Activated naive CD4-positive, alpha-beta T cell treated with anti-CD3 and anti-CD28 coated beads, Interleukin-2, amount 10 ng/mL, durations not matched to agents 7 days and 5 days (primary cell): ENCODE measurements at regions of chr1 and their contacts with region 1.

Region 1: GRCh38 chr1:20194757-20195461 is 8.6 kb upstream of the PLA2G2C start:
- DNase-seq: peak; percentile 81
- H3K4me3 Mint-ChIP-seq: no peak overlapping the region
- H3K27ac Mint-ChIP-seq: no peak overlapping the region
- H3K4me1 Mint-ChIP-seq: no peaks in the 10 kb centered on the region
- H3K27me3 Mint-ChIP-seq: peaks cover 69% of the 10 kb centered on the region

Region 2: GRCh38 chr1:19882111-19883071 is 312.5 kb before region 1 on chr1 and contains the start of gene OTUD3:
- CTCF ChIA-PET with region 1: interaction called, 12 read pairs
- DNase-seq: peak; percentile 97
- H3K4me3 Mint-ChIP-seq: peak within 1 kb of the TSS; percentile 85
- H3K27ac Mint-ChIP-seq: peak within 1 kb of the TSS; percentile 77
- H3K4me1 Mint-ChIP-seq: peaks cover 36% of the 10 kb centered on the region
- H3K27me3 Mint-ChIP-seq: peaks cover 14% of the 10 kb centered on the region

Region 3: GRCh38 chr1:20137043-20137442 is 57.9 kb before region 1 on chr1:
- CTCF ChIA-PET with region 1: no interaction called
- DNase-seq: no peak
- H3K4me3 Mint-ChIP-seq: no peak overlapping the region
- H3K27ac Mint-ChIP-seq: no peak overlapping the region
- H3K4me1 Mint-ChIP-seq: no peaks in the 10 kb centered on the region
- H3K27me3 Mint-ChIP-seq: peaks cover 30% of the 10 kb centered on the region

Region 4: DNA sequence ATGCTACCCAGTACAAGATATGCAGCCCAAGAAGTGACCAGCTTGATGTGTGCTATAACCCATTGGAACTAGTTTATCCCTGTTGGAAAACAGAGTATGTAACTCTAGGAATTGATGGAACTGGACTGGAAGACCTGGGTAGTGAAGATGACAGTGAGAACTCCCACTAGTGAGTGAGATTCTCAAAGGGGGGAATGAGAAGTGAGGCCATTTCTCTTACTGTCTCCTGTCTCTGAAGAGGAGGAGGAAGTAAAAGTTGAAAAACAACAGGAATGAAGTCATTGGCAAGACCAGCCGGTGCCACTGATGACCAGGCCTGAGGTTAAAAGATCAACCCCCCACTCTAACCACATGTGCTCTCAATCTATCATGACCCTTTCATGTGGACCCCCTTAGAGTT is 34.9 kb before region 1 on chr1:
- CTCF ChIA-PET with region 1: interaction called, 146 read pairs
- DNase-seq: no peak
- H3K4me3 Mint-ChIP-seq: no peak overlapping the region
- H3K27ac Mint-ChIP-seq: no peak overlapping the region
- H3K4me1 Mint-ChIP-seq: no peaks in the 10 kb centered on the region
- H3K27me3 Mint-ChIP-seq: peaks cover 36% of the 10 kb centered on the region

Region 5: DNA sequence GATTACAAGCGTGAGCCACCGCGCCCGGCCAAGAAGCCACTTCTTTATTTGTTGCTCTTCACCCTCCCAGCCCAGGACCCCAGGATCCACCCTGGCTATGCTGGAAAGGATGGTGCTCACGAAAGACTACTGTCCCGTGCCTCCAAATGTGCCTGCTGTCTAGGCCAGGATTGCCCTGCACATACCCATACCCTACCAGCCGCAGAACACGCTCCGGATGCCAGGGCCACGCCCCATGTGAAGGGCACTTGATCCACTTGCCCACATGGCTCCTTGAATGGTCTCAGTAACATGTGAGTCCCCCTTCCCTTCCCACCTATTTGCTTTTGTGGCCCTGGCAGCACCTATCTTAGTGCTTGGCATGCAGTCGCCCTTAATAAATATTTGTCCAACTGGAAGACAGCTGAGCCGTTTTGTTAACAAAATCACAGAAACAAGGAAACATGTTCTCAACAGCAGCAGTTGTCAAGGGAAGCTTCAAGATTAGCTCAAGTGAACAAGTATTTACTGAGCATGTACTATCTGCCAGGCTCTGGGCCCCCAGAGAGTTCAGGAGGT is 22.8 kb before region 1 on chr1:
- CTCF ChIA-PET with region 1: interaction called, 146 read pairs
- DNase-seq: no peak
- H3K4me3 Mint-ChIP-seq: no peak overlapping the region
- H3K27ac Mint-ChIP-seq: no peak overlapping the region
- H3K4me1 Mint-ChIP-seq: peaks cover 21% of the 10 kb centered on the region
- H3K27me3 Mint-ChIP-seq: peaks cover 13% of the 10 kb centered on the region

Region 6: DNA sequence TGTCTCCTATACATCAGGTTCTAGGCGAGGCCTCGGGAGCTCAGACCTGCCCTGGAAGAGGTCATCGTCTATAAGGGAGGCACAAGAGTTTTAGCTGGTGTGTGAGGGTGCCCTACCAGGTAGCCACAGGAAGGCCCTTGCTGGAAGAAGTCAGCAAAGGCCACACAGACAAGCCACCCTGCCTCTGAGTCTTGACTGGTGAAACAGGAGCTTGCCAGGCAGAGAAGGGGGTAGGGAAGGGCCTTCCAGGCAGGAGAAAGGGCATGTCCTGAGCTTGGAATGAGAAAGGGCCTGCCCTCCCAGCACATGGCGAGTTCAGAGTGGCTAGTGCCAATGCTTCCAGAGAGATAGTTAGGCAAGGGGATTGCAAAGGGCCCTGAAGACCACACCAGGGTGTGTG is 10.3 kb after region 1 on chr1:
- CTCF ChIA-PET with region 1: interaction called, 11 read pairs
- DNase-seq: no peak
- H3K4me3 Mint-ChIP-seq: no peak overlapping the region
- H3K27ac Mint-ChIP-seq: no peak overlapping the region
- H3K4me1 Mint-ChIP-seq: no peaks in the 10 kb centered on the region
- H3K27me3 Mint-ChIP-seq: peaks cover 52% of the 10 kb centered on the region